AG04449 (cell line): ENCODE measurements at regions of chr11 and their contacts with region 1.

Region 1: DNA sequence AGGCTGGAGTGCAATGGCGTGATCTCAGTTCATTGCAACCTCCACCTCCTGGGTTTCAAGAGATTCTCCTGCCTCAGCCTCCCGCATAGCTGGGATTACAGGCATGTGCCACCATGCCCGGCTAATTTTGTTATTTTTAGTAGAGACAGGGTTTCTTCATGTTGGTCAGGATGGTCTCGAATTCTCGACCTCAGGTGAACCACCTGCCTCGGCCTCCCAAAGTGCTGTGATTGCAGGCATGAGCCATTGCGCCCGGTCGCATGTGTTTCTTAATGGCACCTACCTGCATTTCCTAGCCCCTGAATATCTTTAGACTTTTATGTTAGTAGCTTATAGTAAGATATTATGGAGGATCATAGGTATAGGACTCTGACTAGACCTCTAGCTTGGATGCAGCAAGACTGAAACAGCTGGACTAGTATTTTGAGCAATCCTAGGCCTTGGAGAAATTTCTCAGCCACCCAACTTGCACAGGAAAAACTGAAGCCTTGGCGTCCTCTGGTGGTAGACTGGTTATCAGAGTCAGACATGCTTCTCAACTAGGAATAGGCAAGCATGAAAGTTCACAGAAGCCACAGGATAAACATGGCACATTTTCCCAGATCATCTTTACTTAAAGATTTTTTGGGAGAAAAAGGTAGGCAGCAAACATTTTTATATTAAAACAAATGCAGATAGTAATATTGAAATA is 22.7 kb upstream of the C1QTNF4 start:
- DNase-seq: peak; percentile 34
- H3K4me3 ChIP-seq: no peak overlapping the region
- CTCF ChIP-seq: peak; percentile 83

Region 2: GRCh38 chr11:47501101-47501500 is 115.8 kb before region 1 on chr11:
- CTCF ChIA-PET with region 1: no interaction called
- POLR2A ChIA-PET with region 1: no interaction called
- DNase-seq: no peak
- H3K4me3 ChIP-seq: no peak overlapping the region
- CTCF ChIP-seq: no peak

Region 3: GRCh38 chr11:47628026-47628425 is 11.2 kb after region 1 on chr11:
- CTCF ChIA-PET with region 1: interaction called, 16 read pairs
- POLR2A ChIA-PET with region 1: interaction called, 5 read pairs
- DNase-seq: no peak
- H3K4me3 ChIP-seq: no peak overlapping the region
- CTCF ChIP-seq: no peak